ENCODE measurements at regions of chr15 and their contacts with region 1.

Region 1: GRCh38 chr15:73697033-73697467 is 12.9 kb downstream of the CD276 start:
- DNase-seq: peak; percentile 91
- ATAC-seq: peak; percentile 93

Region 2: GRCh38 chr15:73569370-73569769 is 127.7 kb before region 1 on chr15:
- intact Hi-C with region 1: loop called (anchors 5 kb)
- DNase-seq: no peak
- ATAC-seq: no peak

Region 3: DNA sequence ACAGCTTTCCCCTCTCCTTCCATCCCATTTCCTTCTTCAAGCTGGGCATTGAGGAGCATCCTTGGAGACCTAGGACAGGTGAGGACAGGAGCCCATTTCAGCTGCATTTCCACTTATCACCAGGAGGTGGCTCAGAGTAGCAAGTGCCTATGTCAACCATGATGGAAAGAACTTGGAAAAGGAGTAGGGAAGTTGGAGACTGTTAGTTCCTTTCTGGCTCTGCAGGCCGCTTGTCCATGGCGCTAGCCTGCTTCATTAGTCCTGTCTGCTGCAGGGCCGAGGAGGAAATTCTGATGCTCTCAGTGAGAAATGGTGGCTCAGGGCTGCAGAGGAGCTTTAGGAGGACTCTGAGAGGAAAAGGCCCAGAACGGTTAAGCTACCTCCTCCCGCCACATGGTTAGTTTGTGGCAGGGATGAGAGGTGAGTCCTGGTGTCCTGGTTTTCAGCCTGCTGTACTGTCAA is 19.9 kb before region 1 on chr15:
- intact Hi-C with region 1: loop called (anchors 1 kb)
- DNase-seq: no peak
- ATAC-seq: peak; percentile 76

Region 4: DNA sequence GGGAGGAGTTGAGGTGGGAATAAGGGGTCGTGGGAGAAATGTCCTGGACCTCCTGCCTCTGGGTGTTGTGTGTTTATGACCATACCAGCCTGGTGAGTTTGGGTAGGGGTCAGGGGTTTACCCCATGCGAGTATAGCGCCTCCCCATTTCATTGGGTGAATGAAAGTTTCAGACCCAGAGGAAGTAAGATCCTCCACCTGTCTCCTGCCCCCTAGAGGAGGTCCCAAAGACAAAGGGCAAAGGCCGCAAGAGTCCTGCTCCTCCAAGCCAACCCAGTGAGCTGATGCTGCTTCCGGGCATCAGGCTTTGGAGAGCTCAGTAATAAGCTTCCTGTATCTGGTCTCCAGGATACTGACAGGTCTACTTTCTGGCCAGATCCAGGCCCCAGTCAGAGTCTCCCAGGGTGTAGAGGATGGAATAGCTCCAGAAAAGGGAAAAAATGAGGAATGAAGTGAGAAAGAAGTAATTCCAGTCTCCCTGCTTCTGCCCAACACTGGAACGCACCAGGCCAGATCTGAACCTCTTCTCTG is 169.9 kb after region 1 on chr15:
- intact Hi-C with region 1: no loop called
- DNase-seq: no peak
- ATAC-seq: no peak